MCF 10A (cell line): ENCODE measurements at regions of chr2 and their contacts with region 1.

Region 1: GRCh38 chr2:30165050-30165520 is 18.3 kb downstream of the YPEL5 start:
- DNase-seq: peak; percentile 90
- H3K4me3 Mint-ChIP-seq: no peak overlapping the region
- H3K27ac Mint-ChIP-seq: no peak overlapping the region
- H3K4me1 Mint-ChIP-seq: peaks cover 31% of the 10 kb centered on the region
- H3K27me3 Mint-ChIP-seq: no peaks in the 10 kb centered on the region
- CTCF ChIP-seq: peak; percentile 59

Region 2: GRCh38 chr2:30095402-30095801 is 69.7 kb before region 1 on chr2:
- CTCF ChIA-PET with region 1: interaction called, 23 read pairs
- POLR2A ChIA-PET with region 1: no interaction called
- intact Hi-C with region 1: loop called (anchors 2 kb)
- DNase-seq: no peak
- H3K4me3 Mint-ChIP-seq: no peak overlapping the region
- H3K27ac Mint-ChIP-seq: no peak overlapping the region
- H3K4me1 Mint-ChIP-seq: no peaks in the 10 kb centered on the region
- H3K27me3 Mint-ChIP-seq: peaks cover 68% of the 10 kb centered on the region
- CTCF ChIP-seq: no peak

Region 3: DNA sequence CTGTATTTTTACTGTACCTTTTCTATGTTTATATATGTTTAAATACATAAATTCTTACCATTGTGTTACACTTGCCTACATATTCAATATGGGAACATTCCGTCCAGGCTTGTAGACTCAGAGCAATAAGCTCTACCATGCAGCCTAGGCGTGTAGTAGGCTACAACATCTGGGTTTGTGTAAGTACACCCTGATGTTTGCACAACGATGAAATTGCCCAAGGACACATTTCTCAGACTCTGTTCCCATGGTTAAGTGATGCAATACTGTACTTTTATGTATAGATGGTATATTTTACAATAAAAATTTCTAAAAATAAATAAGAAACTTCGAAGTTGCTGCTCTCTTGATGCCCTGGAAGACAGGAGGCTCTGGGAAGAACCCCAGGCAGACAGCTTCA is 20.1 kb after region 1 on chr2:
- CTCF ChIA-PET with region 1: interaction called, 77 read pairs
- POLR2A ChIA-PET with region 1: interaction called, 5 read pairs
- intact Hi-C with region 1: no loop called
- DNase-seq: peak; percentile 96
- H3K4me3 Mint-ChIP-seq: no peak overlapping the region
- H3K27ac Mint-ChIP-seq: peak overlapping the region; percentile 97
- H3K4me1 Mint-ChIP-seq: peaks cover 20% of the 10 kb centered on the region
- H3K27me3 Mint-ChIP-seq: no peaks in the 10 kb centered on the region
- CTCF ChIP-seq: no peak

Region 4: GRCh38 chr2:30208452-30208851 is 43.4 kb after region 1 on chr2:
- CTCF ChIA-PET with region 1: interaction called, 206 read pairs
- POLR2A ChIA-PET with region 1: interaction called, 36 read pairs
- intact Hi-C with region 1: loop called (anchors 1 kb)
- DNase-seq: peak; percentile 73
- H3K4me3 Mint-ChIP-seq: no peak overlapping the region
- H3K27ac Mint-ChIP-seq: no peak overlapping the region
- H3K4me1 Mint-ChIP-seq: peaks cover 6% of the 10 kb centered on the region
- H3K27me3 Mint-ChIP-seq: no peaks in the 10 kb centered on the region
- CTCF ChIP-seq: peak; percentile 90

Region 5: GRCh38 chr2:30310955-30311354 is 145.9 kb after region 1 on chr2:
- CTCF ChIA-PET with region 1: no interaction called
- POLR2A ChIA-PET with region 1: no interaction called
- intact Hi-C with region 1: no loop called
- DNase-seq: no peak
- H3K4me3 Mint-ChIP-seq: no peak overlapping the region
- H3K27ac Mint-ChIP-seq: no peak overlapping the region
- H3K4me1 Mint-ChIP-seq: no peaks in the 10 kb centered on the region
- H3K27me3 Mint-ChIP-seq: no peaks in the 10 kb centered on the region
- CTCF ChIP-seq: no peak

Region 6: DNA sequence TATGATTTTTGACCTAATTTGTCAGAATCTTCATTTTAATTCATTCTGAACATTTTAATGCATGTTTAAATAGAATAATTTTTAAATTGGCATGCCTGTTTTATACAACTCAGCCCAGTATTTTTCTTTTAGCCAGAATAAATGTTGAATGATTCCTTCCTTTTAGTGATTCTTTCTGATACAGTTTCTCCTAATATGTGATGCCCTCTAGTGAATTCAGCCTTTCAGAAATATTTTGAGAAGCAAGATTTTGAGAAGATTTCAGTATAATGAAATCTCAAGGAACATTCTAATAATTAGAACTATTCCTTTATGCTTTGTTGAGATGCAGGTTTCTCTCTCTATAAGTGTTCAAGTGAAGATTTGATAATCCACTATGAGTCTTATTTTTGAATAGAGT is 310.5 kb after region 1 on chr2:
- CTCF ChIA-PET with region 1: interaction called, 20 read pairs
- POLR2A ChIA-PET with region 1: interaction called, 4 read pairs
- intact Hi-C with region 1: no loop called
- DNase-seq: no peak
- H3K4me3 Mint-ChIP-seq: no peak overlapping the region
- H3K27ac Mint-ChIP-seq: no peak overlapping the region
- H3K4me1 Mint-ChIP-seq: peaks cover 9% of the 10 kb centered on the region
- H3K27me3 Mint-ChIP-seq: no peaks in the 10 kb centered on the region
- CTCF ChIP-seq: no peak

Region 7: DNA sequence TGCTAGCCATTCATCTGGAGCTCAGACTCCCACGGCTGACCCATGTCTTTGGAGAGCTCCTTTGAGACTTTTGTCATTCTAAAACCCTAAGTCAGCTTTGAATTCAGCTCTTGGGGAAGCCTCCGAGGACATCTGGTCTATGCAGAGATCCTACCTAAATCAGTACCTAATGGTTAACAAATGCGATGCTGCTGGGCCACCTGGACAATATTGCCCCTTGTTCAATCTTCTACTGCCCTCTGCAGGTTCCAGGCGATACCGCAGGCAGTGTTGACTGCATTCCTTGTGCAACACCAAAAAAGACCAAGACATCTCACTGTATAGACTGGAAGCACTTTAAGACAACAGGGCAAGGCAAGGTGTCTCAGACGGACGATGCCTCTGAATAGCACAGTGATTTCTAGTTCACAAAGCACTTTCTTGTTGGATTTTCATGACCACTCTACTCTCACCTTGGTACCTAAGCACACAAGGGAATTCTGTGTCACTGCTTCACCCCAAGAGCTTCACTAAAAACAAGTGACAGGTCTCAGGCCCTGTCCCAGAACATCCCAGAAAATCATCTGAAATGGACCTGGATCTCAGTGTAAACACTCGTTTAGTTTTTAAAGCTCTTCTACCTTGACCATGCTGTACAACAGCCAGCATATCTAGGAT is 1168.6 kb after region 1 on chr2:
- CTCF ChIA-PET with region 1: interaction called, 4 read pairs
- POLR2A ChIA-PET with region 1: no interaction called
- intact Hi-C with region 1: loop called (anchors 10 kb)
- DNase-seq: peak; percentile 83
- H3K4me3 Mint-ChIP-seq: no peak overlapping the region
- H3K27ac Mint-ChIP-seq: no peak overlapping the region
- H3K4me1 Mint-ChIP-seq: peaks cover 31% of the 10 kb centered on the region
- H3K27me3 Mint-ChIP-seq: no peaks in the 10 kb centered on the region
- CTCF ChIP-seq: peak; percentile 96